T-cell (primary cell): ENCODE measurements at regions of chr2 and their contacts with region 1.

Region 1: DNA sequence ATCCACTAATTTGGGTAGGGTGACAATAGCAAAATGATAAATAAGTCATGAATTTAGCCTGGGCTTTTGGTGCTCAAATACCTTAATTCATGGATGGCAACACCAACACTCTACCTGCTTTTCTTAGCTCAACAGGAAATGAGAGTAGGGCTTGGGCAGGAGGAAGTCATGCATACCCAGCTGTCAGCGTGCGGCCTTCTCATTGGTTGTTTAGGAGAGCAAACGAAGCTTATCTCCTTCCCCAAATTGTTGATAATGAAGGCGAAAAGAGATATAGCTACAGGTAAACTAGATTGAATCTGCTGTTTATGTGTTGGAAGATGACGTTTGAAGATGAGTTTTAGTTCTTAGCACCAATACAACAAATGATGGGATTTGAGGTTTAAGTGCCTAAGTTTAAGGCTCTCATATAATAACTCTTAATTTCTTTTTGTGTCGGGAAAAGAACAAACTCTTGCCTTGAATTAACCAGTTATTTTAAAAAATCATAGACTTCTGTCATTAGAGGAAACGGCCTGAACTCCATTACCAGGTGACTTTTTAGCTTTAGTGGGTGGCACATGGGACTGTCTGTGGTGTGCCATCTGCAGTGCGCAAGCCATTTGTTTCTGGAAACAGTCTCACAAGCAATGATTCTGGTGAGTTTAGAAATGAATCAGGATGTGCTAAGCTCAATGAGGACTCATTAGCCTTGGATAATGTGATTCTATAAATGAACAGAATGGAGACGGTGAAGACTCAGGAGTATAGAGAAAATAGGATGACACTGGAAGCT is 19.8 kb downstream of the MAP4K4 start:
- DNase-seq: peak in 32 of 35 experiments; percentile 42 to 78 (median 62)
- ATAC-seq: peak; percentile 70 to 78 (median 74)
- H3K4me3 ChIP-seq: peak overlapping the region in 1 of 2 donors; percentile 2
- H3K4me3 Mint-ChIP-seq: peak overlapping the region; percentile 58 to 81 (median 59)
- H3K27ac ChIP-seq: peak overlapping the region; percentile 76
- H3K27ac Mint-ChIP-seq: peak overlapping the region; percentile 95 to 98
- H3K4me1 ChIP-seq: peaks cover 70 to 72% of the 10 kb centered on the region in 2 experiments
- H3K4me1 Mint-ChIP-seq: peaks cover 76 to 90% (median 90%) of the 10 kb centered on the region in 3 donors
- H3K27me3 ChIP-seq: no peaks in the 10 kb centered on the region
- H3K27me3 Mint-ChIP-seq: no peaks in the 10 kb centered on the region

Region 2: GRCh38 chr2:101688261-101688660 is 29.0 kb before region 1 on chr2:
- CTCF ChIA-PET with region 1: no interaction called
- POLR2A ChIA-PET with region 1: no interaction called
- DNase-seq: no peak
- ATAC-seq: no peak
- H3K4me3 ChIP-seq: no peak overlapping the region
- H3K4me3 Mint-ChIP-seq: no peak overlapping the region
- H3K27ac ChIP-seq: no peak overlapping the region
- H3K27ac Mint-ChIP-seq: no peak overlapping the region
- H3K4me1 ChIP-seq: peaks cover 8 to 10% of the 10 kb centered on the region in 2 experiments
- H3K4me1 Mint-ChIP-seq: peaks cover 15 to 24% (median 22%) of the 10 kb centered on the region in 3 donors
- H3K27me3 ChIP-seq: no peaks in the 10 kb centered on the region
- H3K27me3 Mint-ChIP-seq: no peaks in the 10 kb centered on the region

Region 3: DNA sequence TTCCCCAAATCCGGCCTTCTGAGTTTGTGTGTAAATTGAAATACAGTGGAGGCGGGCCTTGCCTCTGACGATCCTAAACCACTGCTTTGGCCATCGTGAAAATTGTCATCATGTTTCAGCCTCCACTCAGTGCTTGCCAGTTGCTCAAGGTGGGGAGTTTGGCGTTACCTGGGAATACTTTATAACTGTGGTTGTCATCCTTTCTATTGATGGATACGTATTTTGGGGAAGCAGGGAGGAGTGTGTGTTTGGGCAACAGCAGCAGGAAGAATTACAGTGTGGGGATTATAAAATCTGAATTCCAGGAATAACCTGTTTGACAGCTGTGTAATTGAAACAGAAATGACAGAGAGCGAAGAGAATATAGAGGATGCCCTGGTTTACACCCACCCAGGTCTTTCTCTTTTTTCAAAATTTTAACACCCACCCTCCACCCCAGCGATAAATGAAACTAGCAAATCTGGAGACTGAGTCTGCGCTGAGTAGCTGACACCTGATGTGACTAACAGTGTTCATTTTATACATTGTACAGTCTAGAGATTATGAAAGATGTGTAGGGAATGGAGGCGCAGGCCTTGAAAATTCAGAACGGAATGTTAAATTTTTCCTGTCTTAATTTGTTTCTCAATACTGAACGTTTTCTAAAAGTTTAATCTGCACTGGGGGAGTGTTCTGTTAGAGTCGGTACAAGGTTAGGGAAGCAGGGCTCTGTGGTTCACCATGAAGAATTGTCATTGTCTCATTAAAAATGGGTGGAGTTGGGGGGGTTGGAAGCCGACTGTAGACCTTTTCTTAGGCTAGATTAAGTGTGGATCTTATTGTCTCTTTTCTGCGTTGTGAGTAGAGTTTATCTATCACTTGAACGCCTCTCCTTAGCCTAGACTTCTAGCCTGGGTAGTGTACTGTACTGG is 18.2 kb before region 1 on chr2:
- CTCF ChIA-PET with region 1: interaction called, 4 to 9 read pairs
- POLR2A ChIA-PET with region 1: interaction called, 3 to 10 read pairs
- DNase-seq: peak in 11 of 35 experiments; percentile 15 to 56 (median 32)
- ATAC-seq: peak in 2 of 4 experiments; percentile 14 to 23
- H3K4me3 ChIP-seq: peak overlapping the region; percentile 77 to 88
- H3K4me3 Mint-ChIP-seq: no peak overlapping the region
- H3K27ac ChIP-seq: peak overlapping the region; percentile 67
- H3K27ac Mint-ChIP-seq: no peak overlapping the region
- H3K4me1 ChIP-seq: peaks cover 18 to 40% of the 10 kb centered on the region in 2 experiments
- H3K4me1 Mint-ChIP-seq: peaks cover 25 to 37% (median 29%) of the 10 kb centered on the region in 3 donors
- H3K27me3 ChIP-seq: no peaks in the 10 kb centered on the region
- H3K27me3 Mint-ChIP-seq: no peaks in the 10 kb centered on the region

Region 4: GRCh38 chr2:101736861-101737291 is 19.6 kb after region 1 on chr2:
- CTCF ChIA-PET with region 1: no interaction called
- POLR2A ChIA-PET with region 1: no interaction called
- DNase-seq: no peak
- ATAC-seq: peak in 1 of 4 experiments; percentile 19
- H3K4me3 ChIP-seq: no peak overlapping the region
- H3K4me3 Mint-ChIP-seq: peak overlapping the region in 1 of 3 donors; percentile 16
- H3K27ac ChIP-seq: no peak overlapping the region
- H3K27ac Mint-ChIP-seq: peak overlapping the region; percentile 2 to 56
- H3K4me1 ChIP-seq: peaks cover 43 to 48% of the 10 kb centered on the region in 2 experiments
- H3K4me1 Mint-ChIP-seq: peaks cover 82 to 90% (median 89%) of the 10 kb centered on the region in 3 donors
- H3K27me3 ChIP-seq: no peaks in the 10 kb centered on the region
- H3K27me3 Mint-ChIP-seq: no peaks in the 10 kb centered on the region

Region 5: GRCh38 chr2:102505290-102505689 is 788.0 kb after region 1 on chr2:
- CTCF ChIA-PET with region 1: no interaction called
- POLR2A ChIA-PET with region 1: no interaction called
- DNase-seq: no peak
- ATAC-seq: no peak
- H3K4me3 ChIP-seq: no peak overlapping the region
- H3K4me3 Mint-ChIP-seq: no peak overlapping the region
- H3K27ac ChIP-seq: no peak overlapping the region
- H3K27ac Mint-ChIP-seq: no peak overlapping the region
- H3K4me1 ChIP-seq: no peaks in the 10 kb centered on the region
- H3K4me1 Mint-ChIP-seq: peaks cover 0 to 4% (median 0%) of the 10 kb centered on the region in 3 donors
- H3K27me3 ChIP-seq: peaks cover 0 to 15% of the 10 kb centered on the region in 2 experiments
- H3K27me3 Mint-ChIP-seq: peaks cover 25 to 31% of the 10 kb centered on the region in 2 donors